ENCODE measurements at regions of chr3 and their contacts with region 1.

Region 1: GRCh38 chr3:69120879-69121464 is 1.4 kb downstream of the LMOD3 start:
- DNase-seq: peak; percentile 87
- H3K4me3 Mint-ChIP-seq: no peak overlapping the region
- H3K27ac Mint-ChIP-seq: no peak overlapping the region
- H3K4me1 Mint-ChIP-seq: no peaks in the 10 kb centered on the region
- H3K27me3 Mint-ChIP-seq: no peaks in the 10 kb centered on the region
- CTCF ChIP-seq: peak; percentile 88

Region 2: GRCh38 chr3:68483601-68484000 is 637.4 kb before region 1 on chr3:
- CTCF ChIA-PET with region 1: no interaction called
- POLR2A ChIA-PET with region 1: no interaction called
- intact Hi-C with region 1: no loop called
- DNase-seq: no peak
- H3K4me3 Mint-ChIP-seq: no peak overlapping the region
- H3K27ac Mint-ChIP-seq: no peak overlapping the region
- H3K4me1 Mint-ChIP-seq: no peaks in the 10 kb centered on the region
- H3K27me3 Mint-ChIP-seq: peaks cover 11% of the 10 kb centered on the region
- CTCF ChIP-seq: no peak

Region 3: GRCh38 chr3:69094467-69095205 is 26.3 kb before region 1 on chr3:
- CTCF ChIA-PET with region 1: interaction called, 13 read pairs
- POLR2A ChIA-PET with region 1: interaction called, 3 read pairs
- intact Hi-C with region 1: loop called (anchors 5 kb)
- DNase-seq: no peak
- H3K4me3 Mint-ChIP-seq: no peak overlapping the region
- H3K27ac Mint-ChIP-seq: no peak overlapping the region
- H3K4me1 Mint-ChIP-seq: peaks cover 35% of the 10 kb centered on the region
- H3K27me3 Mint-ChIP-seq: no peaks in the 10 kb centered on the region
- CTCF ChIP-seq: no peak

Region 4: GRCh38 chr3:69137412-69137811 is 16.4 kb after region 1 on chr3:
- CTCF ChIA-PET with region 1: interaction called, 21 read pairs
- POLR2A ChIA-PET with region 1: interaction called, 3 read pairs
- intact Hi-C with region 1: no loop called
- DNase-seq: no peak
- H3K4me3 Mint-ChIP-seq: no peak overlapping the region
- H3K27ac Mint-ChIP-seq: no peak overlapping the region
- H3K4me1 Mint-ChIP-seq: no peaks in the 10 kb centered on the region
- H3K27me3 Mint-ChIP-seq: no peaks in the 10 kb centered on the region
- CTCF ChIP-seq: no peak

Region 5: GRCh38 chr3:69330891-69331400 is 210.0 kb after region 1 on chr3:
- CTCF ChIA-PET with region 1: interaction called, 10 read pairs
- POLR2A ChIA-PET with region 1: no interaction called
- intact Hi-C with region 1: no loop called
- DNase-seq: no peak
- H3K4me3 Mint-ChIP-seq: no peak overlapping the region
- H3K27ac Mint-ChIP-seq: no peak overlapping the region
- H3K4me1 Mint-ChIP-seq: peaks cover 6% of the 10 kb centered on the region
- H3K27me3 Mint-ChIP-seq: no peaks in the 10 kb centered on the region
- CTCF ChIP-seq: no peak

Region 6: GRCh38 chr3:69671082-69671952 is 550.3 kb after region 1 on chr3:
- CTCF ChIA-PET with region 1: interaction called, 17 read pairs
- POLR2A ChIA-PET with region 1: no interaction called
- intact Hi-C with region 1: loop called (anchors 1 kb)
- DNase-seq: peak; percentile 67
- H3K4me3 Mint-ChIP-seq: no peak overlapping the region
- H3K27ac Mint-ChIP-seq: no peak overlapping the region
- H3K4me1 Mint-ChIP-seq: peaks cover 14% of the 10 kb centered on the region
- H3K27me3 Mint-ChIP-seq: no peaks in the 10 kb centered on the region
- CTCF ChIP-seq: peak; percentile 70

Measured in MCF 10A (cell line).